CD14-positive monocyte (primary cell): ENCODE measurements at regions of chr6 and their contacts with region 1.

Region 1: GRCh38 chr6:73532293-73532692 is 11.5 kb upstream of the EEF1A1 start:
- DNase-seq: no peak
- H3K4me3 ChIP-seq: no peak overlapping the region
- H3K4me3 Mint-ChIP-seq: no peak overlapping the region
- H3K27ac ChIP-seq: no peak overlapping the region
- H3K27ac Mint-ChIP-seq: no peak overlapping the region
- H3K4me1 ChIP-seq: peaks cover 8 to 12% of the 10 kb centered on the region in 2 donors
- H3K4me1 Mint-ChIP-seq: peaks cover 14% of the 10 kb centered on the region
- H3K27me3 ChIP-seq: no peaks in the 10 kb centered on the region
- H3K27me3 Mint-ChIP-seq: peaks cover 1 to 5% (median 3%) of the 10 kb centered on the region in 3 donors
- CTCF ChIP-seq: no peak

Region 2: DNA sequence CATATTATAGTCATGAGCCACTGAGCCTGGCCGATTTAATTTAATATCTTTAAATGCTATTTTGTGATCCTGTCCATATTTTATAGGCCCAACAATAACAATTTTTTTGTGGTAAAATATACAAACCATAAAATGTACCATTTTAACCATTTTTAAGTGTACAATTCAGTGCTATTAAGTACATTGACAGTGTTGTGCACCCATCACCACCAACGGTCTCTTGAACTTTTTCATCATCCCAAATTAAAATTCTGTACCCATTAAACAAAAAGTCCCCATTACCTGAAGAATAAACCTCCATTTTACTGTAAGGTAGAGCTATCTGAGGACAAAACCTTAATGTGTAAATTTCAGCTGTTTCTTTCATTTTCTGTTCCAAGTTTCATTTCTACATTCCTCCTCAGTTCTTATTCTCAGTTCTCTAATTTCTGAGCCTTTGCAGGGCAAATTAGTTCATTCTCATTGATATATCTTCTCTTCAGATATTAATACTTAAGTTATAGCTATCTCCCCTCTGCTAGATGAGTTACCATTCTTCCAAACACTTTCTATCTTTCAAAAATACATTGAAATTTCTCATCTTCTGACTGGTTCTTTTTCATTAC is 60.5 kb before region 1 on chr6:
- intact Hi-C with region 1: no loop called
- DNase-seq: peak in 2 of 3 donors; percentile 28 to 60
- H3K4me3 ChIP-seq: peak overlapping the region; percentile 20 to 68 (median 41)
- H3K4me3 Mint-ChIP-seq: peak overlapping the region; percentile 61 to 82
- H3K27ac ChIP-seq: peak overlapping the region; percentile 77 to 84
- H3K27ac Mint-ChIP-seq: peak overlapping the region; percentile 87 to 94 (median 90)
- H3K4me1 ChIP-seq: peaks cover 14 to 31% of the 10 kb centered on the region in 2 donors
- H3K4me1 Mint-ChIP-seq: peaks cover 23% of the 10 kb centered on the region
- H3K27me3 ChIP-seq: no peaks in the 10 kb centered on the region
- H3K27me3 Mint-ChIP-seq: peaks cover 0 to 2% (median 0%) of the 10 kb centered on the region in 3 donors
- CTCF ChIP-seq: no peak

Region 3: GRCh38 chr6:73566954-73567591 is 34.8 kb after region 1 on chr6:
- intact Hi-C with region 1: loop called in 1 of 2 experiments (anchors 5 kb)
- DNase-seq: peak; percentile 75 to 89 (median 87)
- H3K4me3 ChIP-seq: peak overlapping the region in 1 of 3 experiments; percentile 34
- H3K4me3 Mint-ChIP-seq: peak overlapping the region in 1 of 2 donors; percentile 68
- H3K27ac ChIP-seq: peak overlapping the region; percentile 60 to 83
- H3K27ac Mint-ChIP-seq: peak overlapping the region; percentile 79 to 95 (median 90)
- H3K4me1 ChIP-seq: peaks cover 22 to 30% of the 10 kb centered on the region in 2 donors
- H3K4me1 Mint-ChIP-seq: peaks cover 21% of the 10 kb centered on the region
- H3K27me3 ChIP-seq: no peaks in the 10 kb centered on the region
- H3K27me3 Mint-ChIP-seq: peaks cover 0 to 5% (median 0%) of the 10 kb centered on the region in 3 donors
- CTCF ChIP-seq: no peak